ENCODE measurements at regions of chr1 and their contacts with region 1.

Region 1: GRCh38 chr1:89649783-89650182 is 16.9 kb downstream of the LRRC8C start:
- DNase-seq: no peak
- H3K4me3 ChIP-seq: no peak overlapping the region
- CTCF ChIP-seq: no peak

Region 2: DNA sequence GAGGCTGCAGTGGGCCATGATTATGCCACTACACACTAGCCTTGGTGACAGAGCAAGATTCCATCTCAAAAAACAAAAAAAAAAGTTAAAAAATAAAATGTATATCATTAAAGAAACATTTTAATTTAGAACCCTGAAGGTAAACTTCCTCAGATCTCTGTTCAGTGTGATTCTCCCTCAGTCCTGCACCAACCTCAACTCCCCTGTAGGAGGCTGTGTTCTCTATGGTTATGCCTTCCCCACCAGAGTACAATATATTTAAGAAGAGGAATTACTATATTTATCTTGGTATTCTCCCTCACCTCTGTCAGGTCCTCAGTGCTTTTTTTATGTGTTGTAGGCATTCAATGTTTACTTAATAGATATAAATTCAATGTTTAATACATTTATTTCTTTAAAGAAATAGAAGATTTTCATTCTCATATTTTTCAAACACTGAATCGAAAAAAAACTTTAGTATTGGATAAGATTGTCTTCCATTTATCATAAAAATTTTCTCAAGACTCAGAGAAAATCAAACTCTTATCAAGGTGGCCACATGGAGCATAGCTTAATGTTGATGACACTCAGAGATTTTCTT is 129.9 kb before region 1 on chr1:
- in situ Hi-C with region 1: no loop called
- DNase-seq: peak; percentile 20
- H3K4me3 ChIP-seq: no peak overlapping the region
- CTCF ChIP-seq: peak; percentile 68

Region 3: GRCh38 chr1:89739844-89740216 is 90.0 kb after region 1 on chr1:
- in situ Hi-C with region 1: loop called (anchors 5 kb)
- DNase-seq: no peak
- H3K4me3 ChIP-seq: no peak overlapping the region
- CTCF ChIP-seq: no peak

Region 4: DNA sequence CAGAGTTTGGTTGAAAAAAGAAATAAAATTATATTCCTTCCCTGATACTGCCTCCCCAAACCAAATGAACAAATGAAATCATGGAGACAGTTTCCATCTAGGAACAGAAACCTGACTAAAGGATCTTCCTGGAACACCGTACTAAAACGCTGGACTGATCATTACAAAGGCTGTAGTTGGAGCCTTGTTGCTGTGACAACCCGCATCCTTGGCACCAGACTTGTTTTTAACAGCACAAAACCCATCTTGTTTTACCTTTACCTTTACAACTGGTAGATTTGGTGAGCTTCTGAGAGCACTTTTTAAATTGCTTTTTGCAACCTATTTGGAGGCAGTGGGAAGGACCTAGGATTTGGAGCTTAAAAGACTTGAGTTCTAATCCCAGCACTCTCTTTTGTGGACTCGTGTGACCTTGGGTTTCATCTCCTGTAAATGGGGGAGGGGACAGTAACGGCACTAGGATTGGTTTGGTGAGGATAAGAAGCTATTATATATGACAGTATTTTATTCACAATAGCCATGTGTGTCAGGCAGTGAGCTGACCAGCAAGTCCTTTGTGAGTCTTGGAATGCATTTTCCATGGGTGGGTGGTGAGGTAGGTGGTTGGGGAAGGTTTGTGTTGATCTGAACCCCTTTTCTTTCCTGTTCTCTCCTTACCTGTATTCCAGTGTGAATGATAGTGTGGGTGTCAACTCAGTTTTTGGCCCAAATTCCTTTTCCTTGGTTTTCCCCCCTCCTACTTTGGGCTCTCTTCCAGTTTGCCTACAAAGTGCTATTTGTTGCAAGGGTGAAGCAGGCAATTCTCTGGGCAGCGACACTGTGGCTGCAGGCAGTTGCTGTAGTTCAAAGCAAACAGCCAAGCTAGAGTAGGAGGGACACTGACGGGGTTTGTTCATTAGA is 183.7 kb after region 1 on chr1:
- in situ Hi-C with region 1: no loop called
- DNase-seq: no peak
- H3K4me3 ChIP-seq: no peak overlapping the region
- CTCF ChIP-seq: no peak

Measured in astrocyte of the cerebellum (primary cell).